ENCODE measurements at regions of chr2 and their contacts with region 1.

Region 1: DNA sequence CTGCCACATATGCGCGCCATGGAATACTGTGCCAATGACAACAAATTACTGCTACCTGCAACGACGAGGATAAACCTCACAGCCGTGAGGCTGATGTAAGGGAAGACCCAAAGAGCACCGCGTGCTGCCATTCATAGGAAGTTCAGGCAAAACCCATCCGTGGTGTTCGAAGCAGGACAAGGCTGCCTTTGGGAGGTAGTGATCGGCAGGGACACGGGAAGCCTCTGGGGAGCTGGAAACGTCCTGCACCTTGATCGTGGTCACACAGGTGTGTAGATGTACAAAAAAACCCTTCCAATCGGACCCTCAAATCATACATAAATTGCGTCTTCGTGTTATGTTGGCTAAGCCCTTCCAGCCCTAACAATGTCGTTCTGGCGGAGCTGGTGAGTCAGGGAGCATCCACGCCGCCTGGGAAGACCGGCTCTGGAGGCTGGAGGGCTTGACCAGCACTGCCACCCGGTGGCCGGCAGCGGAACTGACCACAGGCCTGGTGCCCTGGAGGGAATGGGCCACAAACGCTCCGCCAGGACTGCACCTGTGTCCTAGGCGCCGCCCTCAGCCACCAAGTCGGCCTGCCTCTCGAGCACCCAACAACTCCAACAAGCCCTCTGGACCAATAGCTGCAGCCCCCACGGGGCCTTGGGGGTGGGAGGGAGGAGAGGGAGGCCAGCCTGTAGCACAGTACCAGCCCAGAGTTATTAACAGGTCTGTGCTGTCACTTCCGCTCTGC is 4.1 kb upstream of the NEURL3 start:
- DNase-seq: peak; percentile 86 to 94 (median 90)
- ATAC-seq: peak; percentile 81 to 93 (median 92)
- H3K4me3 ChIP-seq: no peak overlapping the region
- H3K27ac ChIP-seq: no peak overlapping the region
- H3K4me1 ChIP-seq: peaks cover 0 to 21% (median 14%) of the 10 kb centered on the region in 12 donors
- H3K27me3 ChIP-seq: no peaks in the 10 kb centered on the region
- CTCF ChIP-seq: peak; percentile 96 to 100 (median 98)
- POLR2A ChIP-seq: no peak

Region 2: DNA sequence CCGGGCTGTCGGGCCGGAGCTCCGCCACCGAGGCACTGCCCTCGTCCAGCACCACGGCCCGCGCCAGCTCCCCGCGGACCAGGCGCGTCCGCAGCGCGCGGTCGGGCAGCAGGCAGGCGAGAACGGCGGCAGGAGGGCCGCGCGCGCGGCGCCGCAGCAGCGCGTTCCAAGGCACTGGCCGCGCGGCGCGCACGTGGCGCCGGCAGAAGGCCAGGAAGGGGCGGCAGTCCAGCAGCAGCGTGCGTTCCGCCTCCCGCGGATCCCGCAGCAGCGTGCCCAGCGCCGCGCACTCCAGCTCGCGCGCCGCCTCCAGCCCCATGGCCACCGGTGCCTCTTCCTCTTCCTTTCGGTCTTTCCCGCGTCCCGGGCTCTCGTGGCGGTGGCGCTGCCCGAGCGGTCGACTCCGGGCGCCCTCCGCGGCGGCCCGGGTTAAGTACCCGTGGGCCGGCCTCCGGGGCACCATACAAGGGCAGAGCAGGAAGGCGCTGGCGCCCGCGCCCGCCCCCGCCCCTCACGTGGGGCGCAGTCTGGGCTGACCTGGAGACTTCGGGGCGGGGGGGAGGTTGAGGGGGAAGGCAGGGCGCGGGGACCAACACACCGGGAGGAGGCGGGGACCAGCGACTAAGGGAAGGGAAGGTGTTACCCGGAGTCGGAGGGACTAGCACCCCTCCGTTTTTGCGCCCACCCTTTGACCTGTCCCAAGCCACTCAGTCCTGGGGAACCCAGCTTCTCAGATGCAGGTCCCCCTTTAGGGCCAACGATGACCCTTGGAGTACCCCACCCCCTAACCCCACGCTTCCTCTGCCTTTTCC is 364.0 kb before region 1 on chr2 and contains the start of gene DUSP2:
- intact Hi-C with region 1: loop called in 2 of 10 experiments (anchors 5 to 10 kb)
- DNase-seq: peak; percentile 77 to 89 (median 79)
- ATAC-seq: peak; percentile 66 to 91 (median 85)
- H3K4me3 ChIP-seq: peak within 1 kb of the TSS; percentile 29 to 69 (median 56)
- H3K27ac ChIP-seq: peak within 1 kb of the TSS; percentile 4 to 90 (median 50)
- H3K4me1 ChIP-seq: peaks cover 0 to 60% (median 27%) of the 10 kb centered on the region in 12 donors
- H3K27me3 ChIP-seq: peaks cover 0 to 7% (median 0%) of the 10 kb centered on the region in 9 donors
- CTCF ChIP-seq: peak in 2 of 12 donors; percentile 20 to 26
- POLR2A ChIP-seq: peak in 1 of 2 donors; percentile 60
- total RNA-seq, gene DUSP2: 0.56 to 11.1 (median 2.7) TPM

Region 3: GRCh38 chr2:96265840-96266679 is 243.2 kb before region 1 on chr2 and contains the starts of genes CIAO1 and TMEM127:
- intact Hi-C with region 1: no loop called
- DNase-seq: peak; percentile 99 to 100 (median 99)
- ATAC-seq: peak; percentile 95 to 97 (median 96)
- H3K4me3 ChIP-seq: peak within 1 kb of the TSS; percentile 72 to 100 (median 90)
- H3K27ac ChIP-seq: peak within 1 kb of the TSS; percentile 86 to 98 (median 95)
- H3K4me1 ChIP-seq: peaks cover 16 to 55% (median 49%) of the 10 kb centered on the region in 12 donors
- H3K27me3 ChIP-seq: no peaks in the 10 kb centered on the region
- CTCF ChIP-seq: peak in 7 of 12 donors; percentile 7 to 30 (median 20)
- POLR2A ChIP-seq: peak; percentile 91 to 97
- total RNA-seq, gene CIAO1: 57.7 to 109 (median 68.7) TPM
- total RNA-seq, gene TMEM127: 71.8 to 134 (median 103) TPM

Region 4: GRCh38 chr2:96329416-96330269 is 179.6 kb before region 1 on chr2:
- intact Hi-C with region 1: loop called in 1 of 10 experiments (anchors 10 kb)
- DNase-seq: peak in 1 of 5 donors; percentile 35
- ATAC-seq: no peak
- H3K4me3 ChIP-seq: no peak overlapping the region
- H3K27ac ChIP-seq: peak overlapping the region in 3 of 12 donors; percentile 28 to 40 (median 34)
- H3K4me1 ChIP-seq: peaks cover 0 to 48% (median 18%) of the 10 kb centered on the region in 12 donors
- H3K27me3 ChIP-seq: peaks cover 0 to 12% (median 0%) of the 10 kb centered on the region in 9 donors
- CTCF ChIP-seq: no peak
- POLR2A ChIP-seq: no peak

Region 5: DNA sequence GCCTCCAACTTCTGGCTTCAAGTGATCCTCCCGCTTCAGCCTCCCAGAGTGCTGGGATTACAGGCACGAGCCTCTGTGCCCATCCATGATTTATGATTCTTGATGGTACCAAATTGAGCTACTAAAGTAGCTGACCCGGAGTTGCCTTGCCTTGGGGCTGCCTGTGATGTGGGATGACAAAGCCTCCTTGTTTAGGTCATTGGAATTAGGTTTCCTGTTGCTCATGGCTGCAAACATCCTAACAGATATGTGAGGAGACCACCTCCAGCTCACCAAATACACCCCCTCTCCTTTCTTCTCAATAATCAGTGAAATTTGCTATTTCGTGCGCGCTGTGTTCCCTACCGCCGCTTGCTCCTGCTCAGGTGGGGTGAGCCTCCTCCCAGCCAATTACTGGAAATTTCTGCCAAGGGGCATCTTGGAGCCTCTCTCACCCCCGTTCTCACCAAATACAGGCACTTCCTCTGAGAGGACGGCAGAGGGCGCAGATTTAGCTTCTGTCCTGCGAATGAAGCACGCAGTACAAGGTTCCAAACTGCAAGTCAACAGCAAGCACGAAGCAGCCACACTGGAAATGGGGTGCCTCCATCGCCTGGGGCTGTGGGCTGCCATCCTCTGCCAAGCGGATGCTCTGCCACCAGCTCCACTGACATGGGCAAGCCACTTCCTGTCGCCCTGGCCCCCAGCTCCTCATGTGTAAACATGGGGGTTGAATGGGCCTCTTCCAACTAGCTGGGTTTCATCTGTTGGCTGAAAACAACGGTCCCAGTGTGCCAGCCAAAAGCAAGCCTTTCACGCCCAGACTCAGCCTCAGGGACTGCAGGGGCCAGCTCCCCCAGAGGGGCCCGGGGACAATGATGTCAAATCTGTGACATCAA is 102.0 kb before region 1 on chr2:
- intact Hi-C with region 1: loop called (anchors 1 to 2 kb)
- DNase-seq: peak; percentile 62 to 73 (median 65)
- ATAC-seq: peak; percentile 42 to 68 (median 54)
- H3K4me3 ChIP-seq: no peak overlapping the region
- H3K27ac ChIP-seq: peak overlapping the region in 7 of 12 donors; percentile 1 to 77 (median 68)
- H3K4me1 ChIP-seq: peaks cover 0 to 38% (median 23%) of the 10 kb centered on the region in 12 donors
- H3K27me3 ChIP-seq: no peaks in the 10 kb centered on the region
- CTCF ChIP-seq: peak; percentile 71 to 89 (median 81)
- POLR2A ChIP-seq: no peak

Region 6: DNA sequence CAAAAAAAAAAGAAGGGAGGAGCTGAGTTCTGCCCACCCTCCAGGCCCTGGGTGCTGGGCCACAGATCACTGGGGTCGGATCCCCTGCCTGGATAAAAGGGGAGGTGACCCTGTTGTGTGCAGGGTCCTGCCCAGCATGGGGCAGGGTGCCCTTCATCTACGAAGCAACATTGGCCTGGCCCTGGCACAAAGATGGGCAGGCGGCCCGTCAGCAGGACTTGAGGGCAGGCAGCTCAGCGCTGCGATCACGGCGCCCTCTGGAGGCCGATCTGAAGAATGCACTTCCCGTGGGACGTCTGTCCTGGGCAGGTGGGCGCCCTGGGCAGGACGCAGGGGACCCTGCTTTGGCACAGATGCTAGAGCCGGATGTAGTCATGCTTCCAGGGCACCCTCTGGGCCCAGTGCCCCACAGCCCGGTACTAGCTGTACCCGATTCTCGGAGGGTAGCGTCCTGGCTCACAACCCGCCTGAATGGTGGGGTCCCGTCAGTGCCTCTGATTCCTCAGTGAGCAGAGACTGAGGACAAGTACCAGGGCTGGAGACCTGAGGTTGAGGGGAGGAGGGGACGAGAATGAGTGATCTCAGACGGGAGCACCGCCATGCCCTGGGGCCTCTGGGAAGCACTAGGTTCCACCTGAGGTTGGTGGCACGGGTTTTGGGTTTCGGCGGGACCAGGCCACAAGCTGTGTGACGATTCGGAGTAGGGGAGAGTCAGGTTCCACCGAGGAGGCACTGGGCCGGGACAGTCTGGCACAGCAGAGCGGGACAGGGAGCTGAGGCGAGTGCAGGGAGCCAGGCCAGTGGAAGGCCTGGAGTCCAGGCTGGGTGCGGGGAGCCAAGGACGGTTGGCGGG is 45.2 kb after region 1 on chr2:
- intact Hi-C with region 1: loop called in 3 of 10 experiments (anchors 2 to 5 kb)
- DNase-seq: peak; percentile 72 to 87 (median 76)
- ATAC-seq: peak; percentile 59 to 74 (median 72)
- H3K4me3 ChIP-seq: peak overlapping the region in 4 of 12 donors; percentile 10 to 35 (median 26)
- H3K27ac ChIP-seq: peak overlapping the region in 1 of 12 donors; percentile 38
- H3K4me1 ChIP-seq: peaks cover 0 to 15% (median 9%) of the 10 kb centered on the region in 12 donors
- H3K27me3 ChIP-seq: no peaks in the 10 kb centered on the region
- CTCF ChIP-seq: peak; percentile 91 to 100 (median 96)
- POLR2A ChIP-seq: no peak

Region 7: GRCh38 chr2:96574364-96574763 is 65.1 kb after region 1 on chr2:
- intact Hi-C with region 1: no loop called
- DNase-seq: no peak
- ATAC-seq: no peak
- H3K4me3 ChIP-seq: no peak overlapping the region
- H3K27ac ChIP-seq: no peak overlapping the region
- H3K4me1 ChIP-seq: peaks cover 0 to 2% (median 0%) of the 10 kb centered on the region in 12 donors
- H3K27me3 ChIP-seq: no peaks in the 10 kb centered on the region
- CTCF ChIP-seq: no peak
- POLR2A ChIP-seq: no peak

Measured in heart left ventricle (tissue), 16 donors.